ENCODE measurements at regions of chr9 and their contacts with region 1.

Region 1: DNA sequence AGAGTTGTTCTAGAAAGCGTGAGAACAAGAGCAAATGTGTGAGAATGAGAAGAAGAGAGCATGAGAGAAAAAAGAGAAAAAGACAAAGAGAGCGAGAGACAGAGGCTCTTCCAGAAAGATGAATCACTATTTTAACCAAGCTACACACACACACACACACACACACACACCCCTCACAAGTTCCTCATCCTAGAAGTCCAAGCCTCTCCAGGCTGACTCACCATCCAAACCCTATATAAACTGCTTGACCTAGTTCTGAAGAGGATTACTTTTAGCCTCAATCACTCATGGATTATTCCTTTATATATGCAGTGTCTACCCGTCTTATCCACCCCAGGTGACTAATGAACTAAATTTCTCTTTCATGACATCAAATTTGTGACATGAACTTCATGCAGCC is 37.6 kb downstream of the C9orf57 start:
- DNase-seq: no peak
- ATAC-seq: no peak
- H3K4me3 ChIP-seq: no peak overlapping the region
- H3K27ac ChIP-seq: no peak overlapping the region
- H3K4me1 ChIP-seq: peaks cover 0 to 3% (median 0%) of the 10 kb centered on the region in 9 donors
- H3K27me3 ChIP-seq: no peaks in the 10 kb centered on the region
- CTCF ChIP-seq: no peak

Region 2: GRCh38 chr9:71285191-71285656 is 737.6 kb before region 1 on chr9:
- intact Hi-C with region 1: loop called in 2 of 10 experiments (anchors 10 kb)
- DNase-seq: peak in 1 of 2 donors; percentile 46
- ATAC-seq: peak in 7 of 8 donors; percentile 49 to 74 (median 70)
- H3K4me3 ChIP-seq: no peak overlapping the region
- H3K27ac ChIP-seq: no peak overlapping the region
- H3K4me1 ChIP-seq: peaks cover 0 to 8% (median 0%) of the 10 kb centered on the region in 9 donors
- H3K27me3 ChIP-seq: no peaks in the 10 kb centered on the region
- CTCF ChIP-seq: peak; percentile 70 to 89 (median 83)

Region 3: GRCh38 chr9:71783120-71783530 is 239.7 kb before region 1 on chr9:
- intact Hi-C with region 1: no loop called
- DNase-seq: peak; percentile 6 to 12
- ATAC-seq: peak in 5 of 8 donors; percentile 55 to 71 (median 58)
- H3K4me3 ChIP-seq: no peak overlapping the region
- H3K27ac ChIP-seq: peak overlapping the region in 1 of 10 donors; percentile 74
- H3K4me1 ChIP-seq: peaks cover 0 to 3% (median 0%) of the 10 kb centered on the region in 9 donors
- H3K27me3 ChIP-seq: no peaks in the 10 kb centered on the region
- CTCF ChIP-seq: no peak

Region 4: DNA sequence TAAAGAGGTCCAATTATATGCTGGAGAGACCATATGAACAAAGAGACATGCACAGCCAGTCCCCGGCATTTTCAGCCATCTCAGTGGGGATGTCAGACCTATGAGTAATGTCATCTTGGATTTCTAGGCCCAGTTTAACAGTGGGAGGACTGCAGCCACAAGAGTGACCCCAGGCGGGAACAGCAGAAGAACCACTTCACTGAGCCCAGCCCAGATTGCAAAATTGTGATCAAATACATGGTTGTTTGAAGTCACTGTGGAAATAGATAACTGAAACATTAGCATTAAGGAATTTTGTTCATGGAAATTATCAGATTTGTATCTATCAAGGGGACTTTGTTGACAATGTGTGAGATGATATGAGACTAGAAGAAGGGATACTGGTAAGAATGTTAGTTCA is 79.7 kb after region 1 on chr9:
- intact Hi-C with region 1: no loop called
- DNase-seq: no peak
- ATAC-seq: no peak
- H3K4me3 ChIP-seq: no peak overlapping the region
- H3K27ac ChIP-seq: no peak overlapping the region
- H3K4me1 ChIP-seq: no peaks in the 10 kb centered on the region
- H3K27me3 ChIP-seq: no peaks in the 10 kb centered on the region
- CTCF ChIP-seq: no peak

Measured in heart right ventricle (tissue), 16 donors.